H1 (cell line): ENCODE measurements at regions of chr2 and their contacts with region 1.

Region 1: DNA sequence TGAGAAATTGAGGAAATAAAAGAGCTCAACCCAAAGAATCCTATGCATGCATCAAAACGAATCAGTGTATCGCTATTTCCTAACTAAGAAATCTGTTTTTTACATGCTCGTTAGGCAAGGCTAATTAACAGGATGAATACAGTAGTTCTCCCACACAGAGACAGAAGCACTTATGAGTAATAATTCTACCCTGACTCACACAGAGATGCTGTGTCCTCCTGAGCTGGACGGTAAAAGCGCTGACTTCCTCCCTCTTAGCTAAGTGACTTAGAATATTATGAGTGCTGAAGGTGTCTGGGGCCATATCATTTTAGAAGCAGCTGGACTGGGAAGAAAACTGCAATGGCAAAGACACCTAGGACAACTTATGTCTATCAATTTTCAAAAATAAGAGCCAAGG is 18.5 kb downstream of the PLEKHM3 start:
- DNase-seq: no peak
- H3K4me3 ChIP-seq: no peak overlapping the region
- H3K27ac ChIP-seq: no peak overlapping the region
- H3K4me1 ChIP-seq: peaks cover 0 to 4% (median under 1%) of the 10 kb centered on the region in 4 experiments; a peak in 4 of 7 replicates
- H3K27me3 ChIP-seq: no peaks in the 10 kb centered on the region
- CTCF ChIP-seq: no peak
- EP300 ChIP-seq: no peak
- POLR2A ChIP-seq: no peak
- RAD21 ChIP-seq: no peak

Region 2: DNA sequence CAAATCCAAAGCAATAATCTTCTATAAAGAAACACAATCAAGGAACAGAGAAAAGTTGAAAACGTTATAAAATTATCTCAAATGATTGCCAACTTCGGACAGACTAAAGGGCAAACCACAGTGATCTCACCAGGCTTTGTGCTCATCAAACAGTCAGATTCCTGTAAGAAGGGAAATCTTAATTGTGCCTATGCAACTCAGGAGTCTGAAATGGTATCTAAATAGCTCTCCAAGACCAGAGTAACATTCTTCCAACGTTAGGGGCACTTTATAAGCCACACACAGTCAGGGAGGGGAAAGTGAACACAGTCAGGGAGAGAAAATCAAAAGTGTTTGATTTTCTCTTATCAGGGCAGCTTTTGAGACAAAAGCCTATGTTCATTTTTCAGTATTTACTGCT is 10.9 kb before region 1 on chr2:
- CTCF ChIA-PET with region 1: interaction called, 22 read pairs
- POLR2A ChIA-PET with region 1: interaction called, 3 read pairs
- DNase-seq: no peak
- H3K4me3 ChIP-seq: no peak overlapping the region
- H3K27ac ChIP-seq: no peak overlapping the region
- H3K4me1 ChIP-seq: no peaks in the 10 kb centered on the region
- H3K27me3 ChIP-seq: no peaks in the 10 kb centered on the region
- CTCF ChIP-seq: no peak
- EP300 ChIP-seq: no peak
- POLR2A ChIP-seq: no peak
- RAD21 ChIP-seq: no peak

Region 3: DNA sequence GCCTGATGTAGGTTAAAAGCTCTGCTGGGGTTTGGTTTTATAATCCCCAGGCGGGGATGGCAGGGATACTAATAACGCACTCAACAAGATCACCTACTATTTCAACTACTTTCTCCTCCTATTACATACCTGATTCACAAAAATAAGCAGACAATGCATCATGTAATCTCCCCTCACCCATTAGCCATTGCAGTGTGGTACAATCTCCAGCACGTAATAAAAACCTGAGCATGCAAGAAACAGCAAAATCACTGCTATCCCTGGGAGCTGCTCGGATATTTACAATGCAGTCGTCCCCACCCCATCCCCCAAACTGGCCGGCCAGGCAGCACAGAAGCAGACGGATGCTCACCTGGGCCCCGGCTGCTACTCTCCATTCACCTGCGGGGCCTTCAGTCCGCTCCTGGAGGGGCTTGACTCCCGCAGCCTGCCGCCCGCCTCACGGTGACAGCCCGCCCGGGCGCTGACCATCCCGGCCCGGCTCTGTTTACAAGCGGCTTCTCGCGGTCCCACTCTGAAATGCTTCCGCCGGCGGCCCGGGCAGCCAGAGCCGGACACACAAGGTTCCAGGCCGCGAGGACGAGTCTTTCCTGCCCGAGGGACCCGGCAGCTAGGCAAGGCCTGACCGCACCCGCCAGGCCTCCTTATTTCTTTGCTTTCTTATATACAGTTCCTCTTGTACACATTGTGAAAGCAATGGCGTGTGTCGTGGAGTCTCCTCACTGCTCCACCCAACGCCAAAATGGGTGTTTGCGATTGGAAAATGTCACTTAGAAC is 18.4 kb after region 1 on chr2 and contains the start of gene PLEKHM3:
- CTCF ChIA-PET with region 1: interaction called, 4 read pairs
- POLR2A ChIA-PET with region 1: interaction called, 10 read pairs
- DNase-seq: peak in 1 of 2 experiments; percentile 95
- H3K4me3 ChIP-seq: peak within 1 kb of the TSS; percentile 72 to 90 (median 84)
- H3K27ac ChIP-seq: peak within 1 kb of the TSS; percentile 61; the same call in 1 of the 2 replicates
- H3K4me1 ChIP-seq: peaks cover 0 to 5% (median 4%) of the 10 kb centered on the region in 4 experiments; a peak in 5 of 7 replicates
- H3K27me3 ChIP-seq: no peaks in the 10 kb centered on the region
- CTCF ChIP-seq: no peak
- EP300 ChIP-seq: peak; percentile 37 to 77; a peak in 2 of 3 replicates
- POLR2A ChIP-seq: peak; percentile 62 to 78
- RAD21 ChIP-seq: peak; percentile 23 to 47; a peak in 3 of 4 replicates
- total RNA-seq, gene PLEKHM3: 4.6 and 5.8 TPM in 2 replicates